WTC11 (cell line): ENCODE measurements at regions of chr9 and their contacts with region 1.

Region 1: GRCh38 chr9:134778841-134779411 is 101.7 kb upstream of the FCN2 start:
- DNase-seq: peak; percentile 86
- ATAC-seq: peak; percentile 92
- H3K4me3 Mint-ChIP-seq: no peak overlapping the region
- H3K27ac Mint-ChIP-seq: no peak overlapping the region
- H3K4me1 Mint-ChIP-seq: peaks cover 2% of the 10 kb centered on the region
- H3K27me3 Mint-ChIP-seq: no peaks in the 10 kb centered on the region
- CTCF ChIP-seq: peak; percentile 47

Region 2: GRCh38 chr9:134509281-134509680 is 269.6 kb before region 1 on chr9:
- CTCF ChIA-PET with region 1: no interaction called
- POLR2A ChIA-PET with region 1: no interaction called
- DNase-seq: no peak
- ATAC-seq: no peak
- H3K4me3 Mint-ChIP-seq: no peak overlapping the region
- H3K27ac Mint-ChIP-seq: no peak overlapping the region
- H3K4me1 Mint-ChIP-seq: no peaks in the 10 kb centered on the region
- H3K27me3 Mint-ChIP-seq: no peaks in the 10 kb centered on the region
- CTCF ChIP-seq: no peak

Region 3: GRCh38 chr9:134738869-134739659 is 39.9 kb before region 1 on chr9:
- CTCF ChIA-PET with region 1: interaction called, 10 read pairs
- POLR2A ChIA-PET with region 1: no interaction called
- DNase-seq: peak; percentile 83
- ATAC-seq: peak; percentile 88
- H3K4me3 Mint-ChIP-seq: no peak overlapping the region
- H3K27ac Mint-ChIP-seq: peak overlapping the region; percentile 58
- H3K4me1 Mint-ChIP-seq: peaks cover 7% of the 10 kb centered on the region
- H3K27me3 Mint-ChIP-seq: no peaks in the 10 kb centered on the region
- CTCF ChIP-seq: peak; percentile 86

Region 4: GRCh38 chr9:134789168-134789567 is 10.2 kb after region 1 on chr9:
- CTCF ChIA-PET with region 1: interaction called, 16 read pairs
- POLR2A ChIA-PET with region 1: no interaction called
- DNase-seq: no peak
- ATAC-seq: no peak
- H3K4me3 Mint-ChIP-seq: no peak overlapping the region
- H3K27ac Mint-ChIP-seq: no peak overlapping the region; the same call in 1 of the 2 replicates
- H3K4me1 Mint-ChIP-seq: peaks cover 18% of the 10 kb centered on the region
- H3K27me3 Mint-ChIP-seq: no peaks in the 10 kb centered on the region
- CTCF ChIP-seq: no peak

Region 5: GRCh38 chr9:134796882-134797463 is 18.0 kb after region 1 on chr9:
- CTCF ChIA-PET with region 1: interaction called, 12 read pairs
- POLR2A ChIA-PET with region 1: no interaction called
- DNase-seq: no peak
- ATAC-seq: no peak
- H3K4me3 Mint-ChIP-seq: no peak overlapping the region
- H3K27ac Mint-ChIP-seq: no peak overlapping the region
- H3K4me1 Mint-ChIP-seq: peaks cover 5% of the 10 kb centered on the region; the same call in 1 of the 2 replicates
- H3K27me3 Mint-ChIP-seq: no peaks in the 10 kb centered on the region
- CTCF ChIP-seq: no peak

Region 6: GRCh38 chr9:134839455-134840125 is 60.7 kb after region 1 on chr9:
- CTCF ChIA-PET with region 1: interaction called, 12 read pairs
- POLR2A ChIA-PET with region 1: no interaction called
- DNase-seq: peak; percentile 37
- ATAC-seq: peak; percentile 83
- H3K4me3 Mint-ChIP-seq: no peak overlapping the region
- H3K27ac Mint-ChIP-seq: no peak overlapping the region
- H3K4me1 Mint-ChIP-seq: no peaks in the 10 kb centered on the region
- H3K27me3 Mint-ChIP-seq: no peaks in the 10 kb centered on the region
- CTCF ChIP-seq: no peak

Region 7: GRCh38 chr9:134983074-134983473 is 204.1 kb after region 1 on chr9:
- CTCF ChIA-PET with region 1: interaction called, 30 read pairs
- POLR2A ChIA-PET with region 1: no interaction called
- DNase-seq: peak; percentile 82
- ATAC-seq: peak; percentile 93
- H3K4me3 Mint-ChIP-seq: no peak overlapping the region
- H3K27ac Mint-ChIP-seq: no peak overlapping the region
- H3K4me1 Mint-ChIP-seq: peaks cover 9% of the 10 kb centered on the region
- H3K27me3 Mint-ChIP-seq: no peaks in the 10 kb centered on the region; the same call in 1 of the 2 replicates
- CTCF ChIP-seq: peak; percentile 61; the same call in 1 of the 2 replicates